GM12878 (cell line): ENCODE measurements at regions of chr2 and their contacts with region 1.

Region 1: DNA sequence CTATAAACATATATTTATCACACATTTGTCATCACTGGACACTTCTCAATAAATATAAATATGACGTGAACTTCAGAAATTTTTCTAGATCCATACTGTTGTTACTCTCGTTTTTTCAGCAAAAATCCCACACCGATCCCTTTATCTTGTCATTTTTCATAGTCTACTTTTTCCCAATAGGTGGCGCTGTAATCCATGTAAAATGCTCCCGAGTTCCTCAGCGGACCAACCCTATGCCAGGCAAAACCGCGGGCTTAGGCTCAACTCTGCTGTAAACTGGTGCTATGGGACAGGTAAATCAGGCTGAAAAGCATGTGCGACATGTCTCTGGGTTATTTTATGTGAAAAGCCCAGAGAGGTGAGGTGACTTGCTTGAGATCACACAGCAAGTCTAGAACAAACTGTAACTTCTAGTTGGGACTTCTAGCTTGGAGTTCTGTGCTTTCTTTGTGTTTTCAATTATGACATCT is 104.0 kb downstream of the COBLL1 start:
- DNase-seq: no peak
- ATAC-seq: peak; percentile 86
- H3K4me3 ChIP-seq: no peak overlapping the region
- H3K27ac ChIP-seq: no peak overlapping the region
- H3K4me1 ChIP-seq: no peaks in the 10 kb centered on the region
- H3K27me3 ChIP-seq: no peaks in the 10 kb centered on the region; a peak in 1 of 4 replicates
- CTCF ChIP-seq: peak; percentile 57 to 73 (median 60)
- EP300 ChIP-seq: no peak
- POLR2A ChIP-seq: no peak
- RAD21 ChIP-seq: peak; percentile 61

Region 2: DNA sequence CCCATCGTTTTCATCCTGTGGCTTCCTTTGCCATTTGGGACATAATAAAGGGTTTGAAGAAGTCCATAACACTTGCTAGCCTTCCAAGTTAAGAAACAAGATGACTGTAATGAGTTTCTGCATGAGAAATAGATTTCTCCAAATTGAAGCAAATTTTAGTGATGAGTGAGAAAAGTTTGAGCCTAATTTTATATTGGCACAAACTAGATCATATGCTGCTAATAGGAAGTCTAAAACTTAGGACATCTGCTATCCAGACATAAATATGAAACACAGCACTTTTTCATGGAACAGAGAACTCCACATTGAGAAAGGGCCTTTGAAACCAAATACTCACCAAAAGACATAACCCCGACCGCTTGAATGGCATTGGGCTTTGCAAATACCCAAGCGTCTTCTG is 177.9 kb after region 1 on chr2:
- CTCF ChIA-PET with region 1: interaction called, 3 read pairs
- POLR2A ChIA-PET with region 1: no interaction called
- RAD21 ChIA-PET with region 1: no interaction called
- SMC1A ChIA-PET with region 1: no interaction called
- in situ Hi-C with region 1: no loop called
- intact Hi-C with region 1: loop called (anchors 1 kb)
- DNase-seq: no peak
- ATAC-seq: no peak
- H3K4me3 ChIP-seq: no peak overlapping the region
- H3K27ac ChIP-seq: no peak overlapping the region
- H3K4me1 ChIP-seq: no peaks in the 10 kb centered on the region
- H3K27me3 ChIP-seq: no peaks in the 10 kb centered on the region
- CTCF ChIP-seq: no peak
- EP300 ChIP-seq: no peak
- POLR2A ChIP-seq: no peak
- RAD21 ChIP-seq: no peak